Adrenal gland (tissue), 19 donors: ENCODE measurements at regions of chr7 and their contacts with region 1.

Region 1: DNA sequence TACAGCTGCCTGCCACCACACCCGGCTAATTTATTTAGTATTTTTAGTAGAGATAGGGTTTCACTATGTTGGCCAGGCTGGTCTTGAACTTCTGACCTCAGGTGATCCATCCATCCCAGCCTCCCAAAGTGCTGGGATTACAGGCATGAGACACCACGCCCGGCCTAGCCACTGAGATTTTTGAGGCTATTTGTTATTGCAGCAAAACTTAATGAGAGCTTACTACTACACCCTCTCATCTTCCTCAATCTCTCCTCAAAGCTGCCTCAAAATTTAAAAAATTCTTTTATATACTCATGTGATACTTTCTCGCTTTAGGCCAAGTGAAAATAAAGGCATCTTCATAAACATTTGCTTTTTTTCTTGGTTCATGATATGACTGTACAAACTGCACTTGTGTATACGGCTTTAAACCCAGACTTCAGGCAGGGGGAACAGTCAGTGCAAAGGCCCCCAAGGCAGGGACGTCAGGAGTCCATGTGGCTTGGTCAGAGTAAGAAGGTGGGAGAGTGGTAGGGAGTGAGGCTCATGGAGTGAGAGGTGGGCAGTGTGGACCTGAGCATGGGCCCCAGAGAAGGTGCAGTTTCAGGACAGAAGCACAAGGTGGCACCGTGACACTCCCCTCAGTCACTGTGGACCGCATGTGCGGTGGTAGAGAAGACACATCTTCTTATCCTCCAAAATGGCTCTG is 55.5 kb downstream of the SYPL1 start:
- DNase-seq: peak; percentile 73 to 90 (median 84)
- H3K4me3 ChIP-seq: no peak overlapping the region
- H3K27ac ChIP-seq: no peak overlapping the region
- H3K4me1 ChIP-seq: peaks cover 0 to 2% of the 10 kb centered on the region in 2 donors
- H3K27me3 ChIP-seq: no peaks in the 10 kb centered on the region
- CTCF ChIP-seq: peak; percentile 81 to 96 (median 92)
- POLR2A ChIP-seq: no peak

Region 2: GRCh38 chr7:106094800-106095199 is 38.1 kb after region 1 on chr7:
- intact Hi-C with region 1: loop called in 1 of 2 experiments (anchors 5 kb)
- DNase-seq: no peak
- H3K4me3 ChIP-seq: no peak overlapping the region
- H3K27ac ChIP-seq: no peak overlapping the region
- H3K4me1 ChIP-seq: no peaks in the 10 kb centered on the region
- H3K27me3 ChIP-seq: no peaks in the 10 kb centered on the region
- CTCF ChIP-seq: no peak
- POLR2A ChIP-seq: no peak

Region 3: DNA sequence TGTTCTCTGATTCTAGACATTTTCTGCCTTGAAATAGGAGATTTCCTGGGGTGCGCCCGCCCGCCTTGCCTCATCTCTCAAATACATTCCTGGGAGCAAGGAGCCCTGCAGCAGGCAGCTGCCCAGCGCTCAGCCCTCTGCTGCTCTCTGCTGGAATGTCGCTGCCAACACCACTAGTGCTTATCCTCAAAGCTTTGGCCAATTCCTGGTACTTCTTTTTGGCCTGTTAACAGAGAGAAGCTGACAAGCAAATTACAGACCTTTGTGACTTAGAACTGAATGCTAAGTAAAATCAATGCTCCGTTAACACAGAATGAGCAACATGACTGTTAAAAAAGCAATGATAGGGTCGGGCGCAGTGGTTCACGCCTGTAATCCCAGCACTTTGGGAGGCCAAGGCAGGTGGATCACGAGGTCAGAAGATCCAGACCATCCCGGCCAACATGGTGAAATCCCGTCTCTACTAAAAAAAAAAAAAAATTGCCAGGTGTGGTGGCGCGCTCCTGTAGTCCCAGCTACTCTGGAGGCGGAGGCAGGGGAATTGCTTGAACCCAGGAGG is 97.3 kb after region 1 on chr7:
- intact Hi-C with region 1: loop called (anchors 2 kb)
- DNase-seq: peak; percentile 81 to 94 (median 87)
- H3K4me3 ChIP-seq: no peak overlapping the region
- H3K27ac ChIP-seq: no peak overlapping the region
- H3K4me1 ChIP-seq: no peaks in the 10 kb centered on the region
- H3K27me3 ChIP-seq: no peaks in the 10 kb centered on the region
- CTCF ChIP-seq: peak; percentile 92 to 98 (median 96)
- POLR2A ChIP-seq: no peak